ENCODE measurements at regions of chr13 and their contacts with region 1.

Region 1: GRCh38 chr13:78137404-78138142 is 218.9 kb upstream of the EDNRB start:
- ATAC-seq: peak; percentile 89 to 98 (median 93)
- H3K4me3 ChIP-seq: no peak overlapping the region
- H3K27ac ChIP-seq: no peak overlapping the region
- H3K4me1 ChIP-seq: no peaks in the 10 kb centered on the region

Region 2: GRCh38 chr13:78958006-78958405 is 820.4 kb after region 1 on chr13:
- in situ Hi-C with region 1: loop called in 1 of 9 experiments (anchors 25 kb)
- ATAC-seq: peak in 5 of 8 experiments; percentile 25 to 64 (median 42)
- H3K4me3 ChIP-seq: no peak overlapping the region
- H3K27ac ChIP-seq: no peak overlapping the region
- H3K4me1 ChIP-seq: no peaks in the 10 kb centered on the region

Region 3: GRCh38 chr13:78978381-78978998 is 840.9 kb after region 1 on chr13:
- in situ Hi-C with region 1: loop called in 7 of 9 experiments (anchors 10 to 25 kb)
- ATAC-seq: peak; percentile 48 to 91 (median 68)
- H3K4me3 ChIP-seq: no peak overlapping the region
- H3K27ac ChIP-seq: no peak overlapping the region
- H3K4me1 ChIP-seq: no peaks in the 10 kb centered on the region

Region 4: GRCh38 chr13:79541426-79542049 is 1404.0 kb after region 1 on chr13:
- in situ Hi-C with region 1: loop called in 1 of 9 experiments (anchors 25 kb)
- ATAC-seq: peak in 3 of 8 experiments; percentile 32 to 41 (median 36)
- H3K4me3 ChIP-seq: no peak overlapping the region
- H3K27ac ChIP-seq: no peak overlapping the region
- H3K4me1 ChIP-seq: no peaks in the 10 kb centered on the region

Measured in motor neuron (in vitro differentiated cells).